Activated B cell treated with CpG ODN at 0.5 μM for 24 hours (primary cell): ENCODE measurements at regions of chr19 and their contacts with region 1.

Region 1: DNA sequence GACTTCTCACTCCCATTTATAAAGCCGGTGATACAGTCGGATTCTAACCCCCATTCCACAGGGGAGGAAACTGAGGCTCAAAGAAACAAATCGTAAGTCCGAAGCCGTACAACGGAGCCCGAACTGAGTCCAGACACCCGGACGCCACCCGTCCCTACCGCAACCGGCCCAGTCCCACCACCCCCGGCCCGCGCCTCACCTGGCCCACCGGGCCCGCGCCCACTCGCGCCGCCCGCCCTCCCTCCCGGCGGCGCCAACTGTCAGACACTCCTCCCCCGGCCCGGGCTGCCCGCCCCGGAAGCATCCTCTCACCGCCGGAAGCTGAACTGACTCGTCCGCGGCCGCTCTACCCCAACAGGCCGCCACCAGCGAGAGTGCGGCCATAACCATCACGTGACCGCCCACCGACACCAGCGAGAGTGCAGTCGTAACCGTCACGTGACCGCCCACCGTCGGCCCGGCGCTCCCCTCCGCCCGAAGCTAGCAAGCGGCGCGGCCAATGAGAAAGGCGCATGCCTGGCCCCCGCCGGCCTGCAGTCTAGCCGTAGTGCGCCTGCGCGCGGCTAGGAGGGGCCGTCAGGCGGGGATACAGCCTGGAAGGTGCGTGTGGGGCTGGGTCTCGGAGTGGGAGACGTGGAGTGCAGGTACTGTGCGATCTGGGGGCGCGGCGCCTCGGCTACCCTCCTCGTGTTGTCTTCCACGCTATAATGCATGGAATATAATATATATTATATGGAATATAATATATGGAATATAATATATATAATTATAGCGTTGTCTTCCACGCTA is at the starts of genes C19orf47 and PLD3:
- DNase-seq: peak; percentile 94
- ATAC-seq: peak; percentile 94
- H3K4me3 Mint-ChIP-seq: peak within 1 kb of the TSS; percentile 90
- H3K27ac Mint-ChIP-seq: peak within 1 kb of the TSS; percentile 85
- H3K4me1 Mint-ChIP-seq: peaks cover 28% of the 10 kb centered on the region
- H3K27me3 Mint-ChIP-seq: no peaks in the 10 kb centered on the region
- CTCF ChIP-seq: no peak
- total RNA-seq, gene C19orf47: 14.6 and 14.7 TPM in 2 replicates
- total RNA-seq, gene PLD3: 37.0 and 37.8 TPM in 2 replicates

Region 2: GRCh38 chr19:39996811-39997594 is 351.3 kb before region 1 on chr19 and contains the start of gene ZNF546:
- CTCF ChIA-PET with region 1: no interaction called
- POLR2A ChIA-PET with region 1: no interaction called
- intact Hi-C with region 1: loop called (anchors 5 kb)
- DNase-seq: peak; percentile 86
- ATAC-seq: peak; percentile 93
- H3K4me3 Mint-ChIP-seq: peak within 1 kb of the TSS; percentile 96
- H3K27ac Mint-ChIP-seq: peak within 1 kb of the TSS; percentile 97
- H3K4me1 Mint-ChIP-seq: peaks cover 35% of the 10 kb centered on the region
- H3K27me3 Mint-ChIP-seq: no peaks in the 10 kb centered on the region
- CTCF ChIP-seq: no peak
- total RNA-seq, gene ZNF546: 5.8 and 11.6 TPM in 2 replicates

Region 3: DNA sequence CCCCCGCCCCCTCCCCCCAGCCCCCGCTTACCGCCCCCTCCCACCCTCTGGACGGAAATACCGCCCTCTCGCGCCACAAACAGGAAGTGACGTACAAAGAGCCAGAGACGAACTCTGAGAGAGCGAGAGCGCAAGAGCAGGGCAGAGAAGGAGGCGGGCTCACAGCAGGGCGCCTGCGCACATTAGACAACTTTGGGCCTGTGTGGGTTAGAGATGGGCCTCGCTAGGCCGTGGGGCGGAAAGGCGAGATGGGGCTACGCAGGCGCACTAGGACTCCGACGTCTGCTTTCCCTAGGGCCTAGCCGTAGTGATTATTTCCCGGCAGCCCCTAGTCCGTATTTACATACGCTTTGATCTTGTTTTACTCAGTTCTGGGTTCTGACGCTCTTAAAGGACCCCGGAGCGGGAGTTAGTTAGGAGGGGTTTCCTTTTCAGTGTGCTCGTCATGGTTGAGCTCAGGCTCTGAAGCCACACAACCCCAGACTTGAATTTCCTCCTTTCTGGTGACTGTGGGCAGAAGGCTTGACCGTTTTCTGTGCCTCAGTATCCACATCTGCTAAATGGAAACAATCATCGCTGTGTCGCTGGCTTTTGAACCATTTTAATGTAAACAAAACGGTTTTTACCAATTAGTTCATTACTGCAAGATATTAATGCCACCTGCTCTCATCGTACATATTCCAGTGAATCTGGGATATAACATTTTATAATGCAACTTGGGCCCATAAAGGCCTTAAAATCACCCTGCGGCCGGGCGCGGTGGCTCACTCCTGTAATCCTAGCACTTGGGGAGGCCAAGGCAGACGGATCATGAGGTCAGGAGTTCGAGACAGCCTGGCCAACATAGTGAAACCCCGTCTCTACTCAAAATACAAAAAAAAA is 62.7 kb before region 1 on chr19:
- CTCF ChIA-PET with region 1: no interaction called
- POLR2A ChIA-PET with region 1: interaction called, 10 read pairs
- intact Hi-C with region 1: loop called (anchors 1 kb)
- DNase-seq: peak; percentile 92
- ATAC-seq: peak; percentile 79
- H3K4me3 Mint-ChIP-seq: peak overlapping the region; percentile 82
- H3K27ac Mint-ChIP-seq: peak overlapping the region; percentile 96
- H3K4me1 Mint-ChIP-seq: peaks cover 56% of the 10 kb centered on the region
- H3K27me3 Mint-ChIP-seq: no peaks in the 10 kb centered on the region
- CTCF ChIP-seq: no peak

Region 4: GRCh38 chr19:40425450-40426287 is 77.3 kb after region 1 on chr19 and contains the start of gene SERTAD1:
- CTCF ChIA-PET with region 1: interaction called, 3 read pairs
- POLR2A ChIA-PET with region 1: interaction called, 10 read pairs
- intact Hi-C with region 1: loop called (anchors 1 kb)
- DNase-seq: peak; percentile 100
- ATAC-seq: peak; percentile 90
- H3K4me3 Mint-ChIP-seq: peak within 1 kb of the TSS; percentile 93
- H3K27ac Mint-ChIP-seq: peak within 1 kb of the TSS; percentile 93
- H3K4me1 Mint-ChIP-seq: peaks cover 31% of the 10 kb centered on the region
- H3K27me3 Mint-ChIP-seq: no peaks in the 10 kb centered on the region
- CTCF ChIP-seq: no peak
- total RNA-seq, gene SERTAD1: 13.4 and 13.9 TPM in 2 replicates

Region 5: GRCh38 chr19:40529093-40529954 is 181.0 kb after region 1 on chr19:
- CTCF ChIA-PET with region 1: no interaction called
- POLR2A ChIA-PET with region 1: interaction called, 11 read pairs
- intact Hi-C with region 1: loop called (anchors 2 kb)
- DNase-seq: peak; percentile 91
- ATAC-seq: peak; percentile 91
- H3K4me3 Mint-ChIP-seq: peak overlapping the region; percentile 42
- H3K27ac Mint-ChIP-seq: no peak overlapping the region
- H3K4me1 Mint-ChIP-seq: peaks cover 18% of the 10 kb centered on the region
- H3K27me3 Mint-ChIP-seq: peaks cover 33% of the 10 kb centered on the region
- CTCF ChIP-seq: no peak

Region 6: GRCh38 chr19:40716655-40717324 is 368.5 kb after region 1 on chr19 and contains the starts of genes COQ8B and ITPKC:
- CTCF ChIA-PET with region 1: no interaction called
- POLR2A ChIA-PET with region 1: no interaction called
- intact Hi-C with region 1: loop called (anchors 1 kb)
- DNase-seq: peak; percentile 100
- ATAC-seq: peak; percentile 70
- H3K4me3 Mint-ChIP-seq: peak within 1 kb of the TSS; percentile 90
- H3K27ac Mint-ChIP-seq: peak within 1 kb of the TSS; percentile 95
- H3K4me1 Mint-ChIP-seq: peaks cover 63% of the 10 kb centered on the region
- H3K27me3 Mint-ChIP-seq: no peaks in the 10 kb centered on the region
- CTCF ChIP-seq: no peak
- total RNA-seq, gene COQ8B: 34.4 and 38.5 TPM in 2 replicates
- total RNA-seq, gene ITPKC: 13.0 and 13.3 TPM in 2 replicates